ENCODE measurements at regions of chrX and their contacts with region 1.

Region 1: GRCh38 chrX:53714580-53715345 is 28.2 kb upstream of the HUWE1 start:
- DNase-seq: peak; percentile 79
- ATAC-seq: peak; percentile 75
- H3K4me3 Mint-ChIP-seq: peak overlapping the region; percentile 90
- H3K27ac Mint-ChIP-seq: peak overlapping the region; percentile 100
- H3K4me1 Mint-ChIP-seq: peaks cover 42% of the 10 kb centered on the region
- H3K27me3 Mint-ChIP-seq: no peaks in the 10 kb centered on the region
- CTCF ChIP-seq: no peak

Region 2: GRCh38 chrX:53669258-53669657 is 45.5 kb before region 1 on chrX:
- CTCF ChIA-PET with region 1: no interaction called
- POLR2A ChIA-PET with region 1: no interaction called
- intact Hi-C with region 1: no loop called
- DNase-seq: no peak
- ATAC-seq: no peak
- H3K4me3 Mint-ChIP-seq: no peak overlapping the region
- H3K27ac Mint-ChIP-seq: peak overlapping the region; percentile 34
- H3K4me1 Mint-ChIP-seq: peaks cover 38% of the 10 kb centered on the region
- H3K27me3 Mint-ChIP-seq: no peaks in the 10 kb centered on the region
- CTCF ChIP-seq: no peak

Region 3: DNA sequence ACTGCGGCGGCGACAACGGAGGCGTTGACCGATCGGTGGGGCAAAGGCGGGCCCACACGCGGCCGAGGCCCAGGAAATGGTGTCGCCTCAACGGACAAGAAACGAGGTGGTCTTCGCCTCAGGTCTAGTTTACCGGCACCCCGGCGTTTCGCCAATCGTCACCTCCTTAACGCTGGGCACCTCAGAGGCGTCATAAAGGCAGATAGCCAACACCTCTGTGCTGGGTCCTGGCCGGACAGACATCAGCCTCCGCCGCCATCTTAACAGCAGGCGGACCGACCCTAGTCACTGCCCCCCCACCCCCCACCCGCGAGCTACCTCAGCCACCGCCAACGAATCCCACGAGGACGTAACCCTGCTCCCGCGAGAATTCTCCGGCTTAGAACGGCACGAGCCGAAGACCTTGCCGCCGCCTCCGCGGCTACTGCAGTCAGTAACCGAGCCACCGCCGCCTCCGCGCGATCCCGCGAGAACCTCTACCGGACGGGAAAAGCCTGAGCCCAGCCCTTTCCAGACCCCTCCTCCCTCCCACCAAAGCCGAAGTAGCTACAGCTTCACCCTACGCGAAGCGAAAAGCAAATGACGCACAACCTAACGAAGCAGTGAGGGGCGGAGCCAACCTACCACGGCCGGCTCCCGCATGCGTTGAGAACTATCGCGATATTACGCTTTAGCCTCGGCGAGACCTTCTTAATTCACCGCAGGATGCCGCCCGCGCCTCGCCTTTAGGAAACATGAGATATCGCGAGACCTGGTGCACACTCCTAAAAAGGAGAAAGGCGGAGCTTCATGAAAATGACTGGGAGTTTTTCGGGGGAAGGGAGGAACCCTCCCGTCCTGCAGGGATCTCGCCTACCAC is 31.0 kb before region 1 on chrX:
- CTCF ChIA-PET with region 1: interaction called, 5 read pairs
- POLR2A ChIA-PET with region 1: interaction called, 58 read pairs
- intact Hi-C with region 1: loop called (anchors 1 kb)
- DNase-seq: peak; percentile 95
- ATAC-seq: peak; percentile 78
- H3K4me3 Mint-ChIP-seq: peak overlapping the region; percentile 94
- H3K27ac Mint-ChIP-seq: peak overlapping the region; percentile 94
- H3K4me1 Mint-ChIP-seq: peaks cover 29% of the 10 kb centered on the region
- H3K27me3 Mint-ChIP-seq: no peaks in the 10 kb centered on the region
- CTCF ChIP-seq: no peak

Region 4: DNA sequence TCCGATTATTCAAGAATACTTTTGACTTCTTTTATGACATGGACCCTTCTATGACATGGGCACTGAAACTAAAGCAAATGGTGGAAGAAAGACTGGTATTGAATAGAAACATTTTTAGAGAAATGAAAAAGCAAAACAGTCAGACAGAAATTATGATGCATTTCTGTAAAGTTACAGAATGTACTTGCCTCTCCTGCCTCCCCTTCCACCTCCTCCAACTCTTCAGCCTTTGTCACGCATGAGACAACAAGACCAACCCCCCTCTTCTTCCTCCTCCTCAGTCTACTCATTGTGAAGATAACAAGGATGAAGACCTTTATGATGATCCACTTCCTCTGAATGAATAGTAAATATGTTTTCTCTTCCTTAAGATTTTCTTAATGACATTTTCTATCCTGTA is 18.0 kb after region 1 on chrX:
- CTCF ChIA-PET with region 1: interaction called, 3 read pairs
- POLR2A ChIA-PET with region 1: interaction called, 57 read pairs
- intact Hi-C with region 1: no loop called
- DNase-seq: peak; percentile 36
- ATAC-seq: peak; percentile 82
- H3K4me3 Mint-ChIP-seq: peak overlapping the region; percentile 61
- H3K27ac Mint-ChIP-seq: peak overlapping the region; percentile 92
- H3K4me1 Mint-ChIP-seq: peaks cover 44% of the 10 kb centered on the region
- H3K27me3 Mint-ChIP-seq: no peaks in the 10 kb centered on the region
- CTCF ChIP-seq: no peak

Region 5: GRCh38 chrX:54029529-54030143 is 314.9 kb after region 1 on chrX:
- CTCF ChIA-PET with region 1: no interaction called
- POLR2A ChIA-PET with region 1: no interaction called
- intact Hi-C with region 1: no loop called
- DNase-seq: no peak
- ATAC-seq: no peak
- H3K4me3 Mint-ChIP-seq: no peak overlapping the region
- H3K27ac Mint-ChIP-seq: no peak overlapping the region
- H3K4me1 Mint-ChIP-seq: peaks cover 4% of the 10 kb centered on the region
- H3K27me3 Mint-ChIP-seq: no peaks in the 10 kb centered on the region
- CTCF ChIP-seq: no peak

Measured in activated CD8-positive, alpha-beta T cell treated with anti-CD3 and anti-CD28 coated beads for 36 hours (primary cell).